WTC11 (cell line): ENCODE measurements at regions of chr5 and their contacts with region 1.

Region 1: DNA sequence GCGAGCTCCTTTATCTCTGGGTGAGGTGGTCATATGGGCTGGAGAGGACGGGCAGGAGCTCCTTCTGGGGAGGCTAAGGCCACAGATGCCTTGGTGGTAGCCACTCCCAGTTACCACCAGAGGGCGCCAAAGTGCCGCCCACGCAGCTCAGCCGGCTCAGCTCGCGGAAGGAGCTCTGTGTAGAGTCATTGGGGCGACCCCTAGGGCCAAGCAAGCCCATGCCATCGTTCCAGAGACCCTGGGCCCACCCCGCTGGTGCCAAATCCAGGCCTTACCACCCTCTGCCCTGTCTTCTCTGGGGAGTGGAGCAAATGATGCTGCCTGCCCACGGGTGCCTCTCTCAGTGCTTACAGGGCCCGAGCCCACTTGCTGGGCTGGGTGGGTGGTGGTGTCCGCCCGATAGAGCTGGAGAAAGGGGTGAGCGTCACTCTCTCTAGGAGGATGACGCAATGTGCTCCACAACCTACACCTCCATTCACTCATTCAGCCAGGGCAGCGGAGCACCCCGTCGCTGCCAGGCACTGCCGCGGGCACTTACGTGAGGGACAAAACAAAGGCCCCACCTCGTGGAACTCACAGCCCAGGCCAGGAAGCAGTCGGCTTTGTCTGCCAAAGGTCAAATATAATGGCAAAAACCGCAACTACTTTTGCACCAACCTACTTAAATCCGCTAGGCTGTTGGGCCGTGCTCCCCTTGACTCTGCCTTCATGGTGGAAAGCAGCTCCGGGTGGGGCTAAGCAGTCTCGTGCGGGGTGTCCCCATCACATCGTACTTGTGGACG is 13.8 kb downstream of the TSPAN17 start:
- DNase-seq: peak; percentile 89
- ATAC-seq: peak; percentile 83
- H3K4me3 Mint-ChIP-seq: no peak overlapping the region
- H3K27ac Mint-ChIP-seq: no peak overlapping the region
- H3K4me1 Mint-ChIP-seq: peaks cover 11% of the 10 kb centered on the region
- H3K27me3 Mint-ChIP-seq: no peaks in the 10 kb centered on the region
- CTCF ChIP-seq: peak; percentile 98

Region 2: DNA sequence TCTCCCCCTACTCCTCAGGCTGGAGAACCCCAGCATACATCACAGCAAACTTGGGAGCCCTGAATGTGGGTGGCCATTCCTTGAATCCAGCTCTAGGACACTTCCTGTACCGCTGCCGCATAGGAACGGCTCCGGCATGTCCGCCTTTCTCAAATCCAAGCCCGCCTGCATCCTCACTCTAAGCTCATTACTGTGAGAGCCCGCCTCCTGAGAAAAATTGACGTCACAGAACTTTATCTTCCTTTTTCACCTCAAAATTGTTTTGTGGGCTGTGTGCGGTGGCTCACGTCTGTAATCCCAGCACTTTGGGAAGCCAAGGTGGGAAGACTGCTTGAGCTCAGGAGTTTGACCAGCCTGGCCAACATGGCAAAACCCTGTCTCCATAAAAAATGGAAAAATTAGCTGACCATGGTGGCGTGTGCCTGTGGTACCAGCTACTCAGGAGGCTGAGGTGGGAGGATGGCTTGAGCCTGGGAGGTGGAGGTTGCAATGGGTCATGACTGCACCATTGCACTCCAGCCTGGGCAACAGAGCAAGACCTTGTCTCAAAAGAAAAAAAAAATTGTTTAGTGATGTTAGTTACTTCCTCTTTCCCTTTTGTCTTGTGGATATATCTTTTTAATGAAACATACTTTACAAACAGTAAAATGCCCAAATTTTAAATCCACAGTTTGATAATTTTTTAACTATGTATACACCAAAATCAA is 146.7 kb before region 1 on chr5:
- CTCF ChIA-PET with region 1: no interaction called
- POLR2A ChIA-PET with region 1: no interaction called
- DNase-seq: no peak
- ATAC-seq: no peak
- H3K4me3 Mint-ChIP-seq: no peak overlapping the region
- H3K27ac Mint-ChIP-seq: no peak overlapping the region
- H3K4me1 Mint-ChIP-seq: no peaks in the 10 kb centered on the region
- H3K27me3 Mint-ChIP-seq: no peaks in the 10 kb centered on the region
- CTCF ChIP-seq: no peak

Region 3: GRCh38 chr5:176525677-176526076 is 135.4 kb before region 1 on chr5:
- CTCF ChIA-PET with region 1: no interaction called
- POLR2A ChIA-PET with region 1: no interaction called
- DNase-seq: no peak
- ATAC-seq: no peak
- H3K4me3 Mint-ChIP-seq: no peak overlapping the region
- H3K27ac Mint-ChIP-seq: peak overlapping the region; percentile 64
- H3K4me1 Mint-ChIP-seq: peaks cover 2% of the 10 kb centered on the region; the same call in 1 of the 2 replicates
- H3K27me3 Mint-ChIP-seq: no peaks in the 10 kb centered on the region; the same call in 1 of the 2 replicates
- CTCF ChIP-seq: no peak

Region 4: GRCh38 chr5:176687881-176688280 is 26.8 kb after region 1 on chr5:
- CTCF ChIA-PET with region 1: interaction called, 233 read pairs
- POLR2A ChIA-PET with region 1: interaction called, 3 read pairs
- DNase-seq: peak; percentile 63
- ATAC-seq: peak; percentile 90
- H3K4me3 Mint-ChIP-seq: no peak overlapping the region
- H3K27ac Mint-ChIP-seq: no peak overlapping the region
- H3K4me1 Mint-ChIP-seq: peaks cover 43% of the 10 kb centered on the region
- H3K27me3 Mint-ChIP-seq: no peaks in the 10 kb centered on the region; the same call in none of the 2 replicates
- CTCF ChIP-seq: no peak

Region 5: DNA sequence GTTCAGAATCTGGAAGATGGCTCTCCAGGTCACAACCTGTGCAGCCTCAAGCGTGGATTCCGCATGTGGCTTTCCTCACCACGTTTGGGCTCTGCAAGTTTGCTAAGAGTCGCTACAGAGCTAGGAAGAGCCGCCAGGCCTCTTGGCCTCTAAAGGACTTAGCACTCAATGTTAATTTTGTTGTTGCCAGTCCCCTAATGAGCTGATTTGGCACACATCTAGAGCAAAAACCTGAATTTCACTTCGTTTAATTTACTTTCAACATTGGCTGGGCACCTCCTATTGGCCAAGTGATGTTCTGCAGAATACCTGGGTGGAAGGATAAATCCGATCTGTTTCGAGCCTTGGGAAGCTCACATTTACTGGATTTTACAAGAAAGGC is 83.5 kb after region 1 on chr5:
- CTCF ChIA-PET with region 1: interaction called, 106 read pairs
- POLR2A ChIA-PET with region 1: interaction called, 3 read pairs
- DNase-seq: no peak
- ATAC-seq: no peak; the same call in 1 of the 2 replicates
- H3K4me3 Mint-ChIP-seq: peak overlapping the region; percentile 70
- H3K27ac Mint-ChIP-seq: no peak overlapping the region
- H3K4me1 Mint-ChIP-seq: peaks cover 64% of the 10 kb centered on the region
- H3K27me3 Mint-ChIP-seq: peaks cover 37% of the 10 kb centered on the region
- CTCF ChIP-seq: no peak

Region 6: DNA sequence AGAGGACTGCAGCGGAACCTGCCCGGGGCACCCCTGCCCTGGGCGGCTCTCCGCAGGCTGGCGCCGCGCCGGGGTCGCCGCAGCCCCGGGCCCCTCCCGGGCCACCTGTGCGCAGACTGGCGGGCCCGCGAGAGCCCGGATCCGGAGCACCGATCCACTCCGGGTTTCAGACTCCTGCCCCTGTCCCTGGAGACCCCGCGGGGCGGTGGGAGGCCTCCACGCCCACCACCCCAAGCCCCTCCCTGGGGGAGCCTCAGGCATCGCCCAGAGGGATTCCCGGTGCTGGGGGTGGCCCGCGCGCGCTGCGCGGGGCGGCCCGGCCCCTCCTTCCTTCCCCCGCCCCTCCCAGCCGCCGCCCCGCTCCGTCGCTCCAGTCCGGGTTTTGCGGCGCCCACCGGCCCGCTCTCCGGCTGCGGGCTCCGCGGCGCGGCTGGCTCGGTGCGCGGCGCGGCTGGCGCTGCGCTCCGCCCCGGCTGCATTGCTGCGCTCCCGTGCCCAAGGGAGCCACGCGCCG is 149.1 kb after region 1 on chr5 and contains the start of gene UNC5A:
- CTCF ChIA-PET with region 1: interaction called, 34 read pairs
- POLR2A ChIA-PET with region 1: no interaction called
- DNase-seq: peak; percentile 73
- ATAC-seq: peak; percentile 48
- H3K4me3 Mint-ChIP-seq: peak within 1 kb of the TSS; percentile 86
- H3K27ac Mint-ChIP-seq: no peak within 1 kb of the TSS
- H3K4me1 Mint-ChIP-seq: peaks cover 35% of the 10 kb centered on the region
- H3K27me3 Mint-ChIP-seq: peaks cover 70% of the 10 kb centered on the region
- CTCF ChIP-seq: no peak
- total RNA-seq, gene UNC5A: 7.9 to 10.2 TPM (median 9.4 TPM) in 3 replicates

Region 7: DNA sequence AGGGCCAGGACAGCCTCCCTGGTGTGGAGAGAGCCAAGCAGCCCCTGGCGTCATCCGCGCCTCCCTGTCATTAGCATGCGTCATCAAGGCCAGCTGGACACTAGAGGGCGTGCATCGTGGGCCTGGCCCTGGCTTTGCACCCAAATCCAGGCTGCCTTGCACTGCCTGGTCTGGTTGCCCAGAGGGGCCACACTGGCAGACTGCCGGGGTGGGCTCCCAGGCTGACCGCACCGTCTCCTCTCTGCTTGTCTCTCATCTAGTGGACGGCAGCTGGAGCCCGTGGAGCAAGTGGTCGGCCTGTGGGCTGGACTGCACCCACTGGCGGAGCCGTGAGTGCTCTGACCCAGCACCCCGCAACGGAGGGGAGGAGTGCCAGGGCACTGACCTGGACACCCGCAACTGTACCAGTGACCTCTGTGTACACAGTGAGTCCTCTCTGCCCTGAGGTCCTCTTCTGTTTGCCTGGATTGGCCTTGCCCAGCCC is 209.1 kb after region 1 on chr5:
- CTCF ChIA-PET with region 1: interaction called, 30 read pairs
- POLR2A ChIA-PET with region 1: no interaction called
- DNase-seq: peak; percentile 83
- ATAC-seq: peak; percentile 86
- H3K4me3 Mint-ChIP-seq: no peak overlapping the region
- H3K27ac Mint-ChIP-seq: peak overlapping the region; percentile 76; the same call in 1 of the 2 replicates
- H3K4me1 Mint-ChIP-seq: peaks cover 19% of the 10 kb centered on the region
- H3K27me3 Mint-ChIP-seq: no peaks in the 10 kb centered on the region; the same call in 1 of the 2 replicates
- CTCF ChIP-seq: peak; percentile 34; the same call in 1 of the 2 replicates

Region 8: DNA sequence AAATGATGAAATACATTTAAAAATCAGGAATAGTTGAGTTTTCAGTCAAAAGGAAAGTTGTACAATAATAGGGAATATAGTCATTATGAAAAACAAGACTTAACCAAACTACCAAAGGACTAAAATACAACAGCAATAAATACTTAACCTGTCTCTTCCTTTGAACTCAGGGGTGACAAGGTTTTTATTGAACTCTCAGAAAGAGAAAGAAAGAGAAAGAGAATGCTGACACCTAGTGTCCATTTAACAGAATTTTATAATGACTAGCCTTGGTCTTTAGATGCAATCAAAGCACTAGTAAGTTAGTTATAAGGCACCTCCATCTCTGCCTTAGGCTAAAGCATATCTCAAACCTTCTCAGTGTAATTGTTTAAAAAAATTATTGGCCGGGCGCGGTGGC is 298.0 kb after region 1 on chr5:
- CTCF ChIA-PET with region 1: interaction called, 10 read pairs
- POLR2A ChIA-PET with region 1: no interaction called
- DNase-seq: no peak
- ATAC-seq: peak; percentile 88
- H3K4me3 Mint-ChIP-seq: no peak overlapping the region
- H3K27ac Mint-ChIP-seq: peak overlapping the region; percentile 89
- H3K4me1 Mint-ChIP-seq: 0 out of 2 replicates have a peak, but pooled peaks cover 2% of the 10 kb centered on the region
- H3K27me3 Mint-ChIP-seq: no peaks in the 10 kb centered on the region
- CTCF ChIP-seq: no peak; the same call in 1 of the 2 replicates